ENCODE measurements at regions of chr9 and their contacts with region 1.

Region 1: DNA sequence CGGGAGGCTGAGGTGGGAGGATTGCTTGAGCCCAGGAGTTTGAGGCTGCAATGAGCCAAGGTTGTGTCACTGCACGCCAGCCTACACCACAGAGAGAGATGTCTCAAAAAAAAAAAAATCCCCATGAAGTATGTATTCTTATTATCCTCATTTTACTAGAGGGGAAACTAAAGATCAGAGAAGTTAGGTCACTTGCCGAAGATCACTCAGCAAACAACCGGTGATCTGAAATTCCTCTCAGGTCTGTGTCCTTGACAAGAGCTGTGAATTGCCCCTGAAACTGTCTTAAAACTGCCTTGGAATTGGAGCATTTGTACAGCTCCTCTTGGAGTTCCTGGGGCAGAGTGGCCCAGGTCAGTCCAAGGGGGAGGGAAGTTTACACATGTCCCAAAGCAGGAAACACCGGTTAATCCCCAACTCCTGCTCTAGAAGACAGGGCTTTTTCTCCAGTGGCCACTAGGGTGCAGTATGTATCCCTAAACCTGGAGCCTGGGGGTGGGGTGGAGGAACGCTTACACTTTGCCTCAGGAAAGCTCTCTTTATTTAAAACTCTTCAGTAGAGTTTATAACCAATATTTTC is 27.6 kb downstream of the AQP7 start:
- DNase-seq: peak; percentile 16
- H3K4me3 ChIP-seq: no peak overlapping the region
- H3K27me3 ChIP-seq: no peaks in the 10 kb centered on the region
- CTCF ChIP-seq: peak; percentile 93

Region 2: DNA sequence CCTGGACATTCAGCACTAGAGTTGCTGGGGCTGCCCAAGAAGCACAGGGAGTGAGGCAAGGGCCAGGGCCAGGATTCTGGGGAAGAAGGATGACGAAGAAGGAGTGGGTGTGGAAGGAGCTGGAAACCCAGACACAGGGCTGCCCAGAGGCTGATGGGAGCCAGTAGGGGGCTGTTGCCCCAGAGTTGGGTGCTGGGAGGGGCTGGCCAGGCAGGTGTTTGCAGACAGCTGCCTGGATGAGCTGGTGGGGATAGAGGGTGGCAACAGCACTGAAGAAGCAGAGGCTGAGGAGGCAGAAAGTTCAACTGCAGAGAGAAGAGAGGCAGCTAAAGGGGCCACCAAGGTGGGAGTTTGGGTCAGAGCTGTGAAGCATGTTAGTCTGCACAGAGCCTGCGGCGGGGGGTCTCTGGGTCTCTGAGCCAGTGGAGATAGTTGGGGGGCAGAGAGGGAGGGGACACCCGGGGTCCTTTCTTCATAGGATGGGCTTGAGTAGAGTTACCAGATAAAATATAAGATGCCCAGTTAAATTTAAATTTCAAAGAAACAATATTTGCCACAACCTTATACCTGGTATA is 30.2 kb after region 1 on chr9:
- CTCF ChIA-PET with region 1: interaction called, 15 read pairs
- POLR2A ChIA-PET with region 1: no interaction called
- DNase-seq: no peak
- H3K4me3 ChIP-seq: no peak overlapping the region
- H3K27me3 ChIP-seq: peaks cover 4% of the 10 kb centered on the region; the same call in 1 of the 2 replicates
- CTCF ChIP-seq: no peak

Region 3: GRCh38 chr9:33452828-33453271 is 78.1 kb after region 1 on chr9:
- CTCF ChIA-PET with region 1: interaction called, 39 read pairs
- POLR2A ChIA-PET with region 1: no interaction called
- DNase-seq: no peak
- H3K4me3 ChIP-seq: no peak overlapping the region
- H3K27me3 ChIP-seq: peaks cover 2% of the 10 kb centered on the region; the same call in 1 of the 2 replicates
- CTCF ChIP-seq: peak; percentile 86

Region 4: DNA sequence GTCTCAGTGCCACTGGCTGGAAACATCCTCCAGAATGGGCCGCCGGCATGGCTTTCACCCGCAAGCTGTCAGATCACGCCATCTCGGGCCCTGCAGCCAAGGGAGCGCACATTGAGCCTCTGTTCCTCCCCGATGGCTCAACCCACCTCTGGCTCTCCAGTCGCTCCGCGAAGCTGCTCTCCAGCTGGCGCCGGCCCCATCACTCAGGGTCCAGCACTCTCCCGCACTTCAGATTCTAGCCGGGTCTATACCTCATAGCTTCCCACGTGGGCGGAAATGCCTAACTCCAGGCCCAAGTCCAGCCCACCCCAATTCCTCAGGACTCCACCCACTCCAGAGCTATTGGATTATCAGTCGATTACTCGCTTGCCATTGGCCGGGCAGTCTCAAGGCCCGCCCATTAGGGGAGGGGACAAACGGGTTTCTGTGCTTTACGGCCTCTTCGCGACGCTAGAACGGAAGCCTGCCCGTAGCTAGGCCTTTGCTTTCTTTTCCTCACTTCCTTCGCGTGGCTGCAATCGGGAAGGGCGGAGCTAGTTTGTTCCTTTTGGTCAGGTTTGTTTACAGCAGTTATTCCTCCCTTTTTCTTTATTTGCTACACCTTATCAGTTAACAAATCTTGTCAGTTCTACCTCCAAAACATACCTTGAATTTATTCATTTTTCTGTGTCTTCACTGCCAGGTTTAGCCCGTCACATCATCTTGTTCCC is 99.1 kb after region 1 on chr9 and contains the start of gene NOL6:
- CTCF ChIA-PET with region 1: interaction called, 36 read pairs
- POLR2A ChIA-PET with region 1: no interaction called
- DNase-seq: peak; percentile 96
- H3K4me3 ChIP-seq: peak within 1 kb of the TSS; percentile 86
- H3K27me3 ChIP-seq: no peaks in the 10 kb centered on the region
- CTCF ChIP-seq: no peak
- polyA plus RNA-seq, gene NOL6: 23.6 and 39.4 TPM in 2 replicates

Measured in BJ (cell line).